Activated naive CD4-positive, alpha-beta T cell treated with anti-CD3 and anti-CD28 coated beads for 36 hours (primary cell): ENCODE measurements at regions of chr3 and their contacts with region 1.

Region 1: DNA sequence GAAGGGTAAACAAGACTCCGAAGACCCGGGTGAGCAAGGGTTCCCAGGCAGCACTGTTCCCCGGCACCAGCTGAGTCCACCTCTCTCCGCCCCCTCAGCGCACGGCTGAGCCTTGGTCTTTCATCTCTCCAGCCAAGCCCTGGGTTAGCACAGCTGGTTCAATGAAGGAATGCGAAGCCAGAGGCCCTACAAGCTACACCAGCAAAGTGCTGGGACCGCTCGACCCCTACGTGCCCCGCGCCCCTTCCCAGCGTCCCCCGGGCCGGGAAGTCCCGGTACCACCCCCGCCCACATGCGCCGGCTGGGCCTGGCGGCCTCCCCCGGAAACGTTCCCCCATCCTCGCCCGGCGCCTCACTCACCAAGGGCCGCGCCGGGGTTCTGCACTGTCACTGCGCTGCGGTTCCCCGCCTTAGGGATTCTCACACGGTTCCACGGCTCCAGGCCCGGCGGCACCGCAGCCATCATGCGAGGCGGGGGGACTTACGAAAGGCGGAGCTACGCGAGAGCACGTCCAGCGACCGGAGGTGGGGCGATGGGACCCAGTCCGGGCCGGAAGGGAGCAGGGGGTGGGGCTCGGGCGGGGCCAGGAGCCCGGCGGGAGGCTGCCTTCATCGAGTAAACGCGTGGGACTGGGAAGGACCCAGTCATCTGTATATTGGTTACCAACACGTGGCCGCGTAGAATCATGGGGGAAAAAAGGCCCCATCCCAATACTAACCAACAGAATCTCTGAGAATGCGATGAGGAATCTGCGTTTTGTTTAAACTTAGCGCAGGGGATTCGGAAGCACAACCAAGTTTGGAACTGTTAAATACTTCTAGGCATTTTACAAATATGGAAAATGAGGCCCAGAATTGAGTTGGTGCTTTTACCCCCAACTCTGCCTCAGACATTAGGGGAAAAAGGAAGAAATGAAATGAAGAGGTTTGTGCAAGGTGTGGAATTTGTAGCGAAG is 28.7 kb downstream of the GTPBP8 start:
- DNase-seq: peak; percentile 94
- H3K4me3 Mint-ChIP-seq: peak overlapping the region; percentile 94
- H3K27ac Mint-ChIP-seq: peak overlapping the region; percentile 99
- H3K4me1 Mint-ChIP-seq: peaks cover 64% of the 10 kb centered on the region
- H3K27me3 Mint-ChIP-seq: no peaks in the 10 kb centered on the region

Region 2: GRCh38 chr3:112973325-112974177 is 45.9 kb before region 1 on chr3:
- CTCF ChIA-PET with region 1: no interaction called
- intact Hi-C with region 1: loop called (anchors 1 kb)
- DNase-seq: peak; percentile 66
- H3K4me3 Mint-ChIP-seq: peak overlapping the region; percentile 70
- H3K27ac Mint-ChIP-seq: peak overlapping the region; percentile 52
- H3K4me1 Mint-ChIP-seq: peaks cover 82% of the 10 kb centered on the region
- H3K27me3 Mint-ChIP-seq: no peaks in the 10 kb centered on the region

Region 3: GRCh38 chr3:113002679-113003078 is 16.8 kb before region 1 on chr3:
- CTCF ChIA-PET with region 1: interaction called, 7 read pairs
- intact Hi-C with region 1: loop called (anchors 1 kb)
- DNase-seq: peak; percentile 90
- H3K4me3 Mint-ChIP-seq: peak overlapping the region; percentile 42
- H3K27ac Mint-ChIP-seq: peak overlapping the region; percentile 95
- H3K4me1 Mint-ChIP-seq: peaks cover 86% of the 10 kb centered on the region
- H3K27me3 Mint-ChIP-seq: no peaks in the 10 kb centered on the region

Region 4: GRCh38 chr3:113070681-113071143 is 51.3 kb after region 1 on chr3:
- CTCF ChIA-PET with region 1: no interaction called
- intact Hi-C with region 1: no loop called
- DNase-seq: no peak
- H3K4me3 Mint-ChIP-seq: no peak overlapping the region
- H3K27ac Mint-ChIP-seq: no peak overlapping the region
- H3K4me1 Mint-ChIP-seq: no peaks in the 10 kb centered on the region
- H3K27me3 Mint-ChIP-seq: no peaks in the 10 kb centered on the region

Region 5: GRCh38 chr3:113097960-113098447 is 78.5 kb after region 1 on chr3:
- CTCF ChIA-PET with region 1: no interaction called
- intact Hi-C with region 1: no loop called
- DNase-seq: no peak
- H3K4me3 Mint-ChIP-seq: no peak overlapping the region
- H3K27ac Mint-ChIP-seq: no peak overlapping the region
- H3K4me1 Mint-ChIP-seq: peaks cover 9% of the 10 kb centered on the region
- H3K27me3 Mint-ChIP-seq: no peaks in the 10 kb centered on the region

Region 6: DNA sequence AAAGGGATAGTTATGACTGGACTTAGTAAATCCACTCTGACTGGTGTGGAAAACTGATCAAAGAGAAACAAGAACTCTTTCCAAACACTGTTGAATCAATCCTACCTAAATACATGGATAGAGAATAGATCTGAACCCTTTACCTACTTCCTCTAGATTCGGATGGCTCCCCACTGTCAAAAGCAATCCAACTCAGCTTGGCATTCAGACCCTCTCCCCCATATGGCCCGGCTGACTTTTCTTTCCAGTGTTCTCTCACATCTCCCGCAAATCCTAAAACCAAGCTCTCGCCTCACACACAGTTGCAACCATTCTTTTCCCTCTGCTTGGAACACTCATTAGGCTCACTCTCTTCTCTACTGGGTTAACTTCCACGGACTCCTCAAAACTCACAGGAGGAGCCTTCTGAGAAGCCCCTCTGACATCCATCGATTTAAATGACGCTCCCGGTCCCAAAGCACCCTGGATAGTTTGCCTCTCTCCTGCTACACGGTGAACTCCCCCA is 494.9 kb after region 1 on chr3:
- CTCF ChIA-PET with region 1: no interaction called
- intact Hi-C with region 1: loop called (anchors 1 kb)
- DNase-seq: no peak
- H3K4me3 Mint-ChIP-seq: no peak overlapping the region
- H3K27ac Mint-ChIP-seq: no peak overlapping the region
- H3K4me1 Mint-ChIP-seq: peaks cover 12% of the 10 kb centered on the region
- H3K27me3 Mint-ChIP-seq: peaks cover 12% of the 10 kb centered on the region

Region 7: GRCh38 chr3:114056130-114057010 is 1036.9 kb after region 1 on chr3 and contains the starts of genes CCDC191 and QTRT2:
- CTCF ChIA-PET with region 1: no interaction called
- intact Hi-C with region 1: loop called (anchors 1 kb)
- DNase-seq: peak; percentile 100
- H3K4me3 Mint-ChIP-seq: peak within 1 kb of the TSS; percentile 97
- H3K27ac Mint-ChIP-seq: peak within 1 kb of the TSS; percentile 95
- H3K4me1 Mint-ChIP-seq: peaks cover 36% of the 10 kb centered on the region
- H3K27me3 Mint-ChIP-seq: no peaks in the 10 kb centered on the region
- total RNA-seq, gene CCDC191: 1.8 to 2.0 TPM
- total RNA-seq, gene QTRT2: 23.0 to 27.8 TPM